Cardiac septum (tissue), 1 donor: ENCODE measurements at regions of chr9 and their contacts with region 1.

Region 1: GRCh38 chr9:35882263-35882848 is 12.2 kb upstream of the OR13J1 start:
- DNase-seq: peak; percentile 90

Region 2: DNA sequence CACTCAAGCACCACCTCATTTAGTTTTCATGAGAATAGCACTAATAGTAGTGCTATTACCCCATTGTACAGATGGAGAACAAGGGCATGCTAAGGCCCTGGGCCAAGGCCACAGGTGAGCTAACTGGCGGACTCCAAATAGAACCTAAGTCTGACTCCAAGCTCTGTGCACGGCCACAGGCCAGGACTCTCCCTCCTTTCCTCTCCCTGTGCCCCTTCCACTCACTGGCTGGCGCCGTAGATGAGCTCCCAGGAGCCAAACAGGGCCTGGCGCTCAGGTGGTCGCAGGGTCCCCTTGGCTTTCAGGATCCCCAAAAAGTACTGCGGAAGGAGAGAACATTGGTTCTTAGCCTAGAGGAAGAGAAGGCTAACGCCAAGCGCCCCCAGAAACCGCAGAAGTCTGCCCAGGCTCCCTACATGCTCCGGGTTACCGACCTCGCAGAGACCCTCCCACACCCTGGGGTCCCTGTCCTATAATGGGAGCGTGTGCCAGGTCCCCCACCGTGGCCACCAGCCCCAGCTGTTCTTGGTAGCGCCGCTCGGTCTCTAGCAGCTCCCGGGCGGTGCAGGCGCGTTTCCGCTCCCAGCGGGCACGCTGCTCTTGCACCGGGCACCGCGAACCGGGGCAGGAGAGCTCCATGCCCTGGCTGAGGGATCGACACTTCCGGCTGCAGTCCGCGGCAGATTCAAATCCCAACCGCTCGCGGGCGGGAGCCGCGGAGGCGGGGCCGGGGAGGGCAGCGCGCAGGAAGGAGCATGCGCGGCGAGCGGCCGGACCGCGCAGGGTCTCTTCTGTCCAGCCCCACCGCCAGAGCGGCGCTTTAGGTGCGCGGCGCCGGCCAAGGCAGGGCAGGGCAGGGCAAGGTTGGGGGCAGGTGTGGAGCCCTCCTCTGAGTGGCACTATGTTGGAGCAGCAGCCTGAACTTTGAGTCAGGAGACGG is 217.6 kb before region 1 on chr9 and contains the start of gene ARHGEF39:
- intact Hi-C with region 1: loop called (anchors 10 kb)
- DNase-seq: peak; percentile 90
- total RNA-seq, gene ARHGEF39: 0.48 TPM

Region 3: DNA sequence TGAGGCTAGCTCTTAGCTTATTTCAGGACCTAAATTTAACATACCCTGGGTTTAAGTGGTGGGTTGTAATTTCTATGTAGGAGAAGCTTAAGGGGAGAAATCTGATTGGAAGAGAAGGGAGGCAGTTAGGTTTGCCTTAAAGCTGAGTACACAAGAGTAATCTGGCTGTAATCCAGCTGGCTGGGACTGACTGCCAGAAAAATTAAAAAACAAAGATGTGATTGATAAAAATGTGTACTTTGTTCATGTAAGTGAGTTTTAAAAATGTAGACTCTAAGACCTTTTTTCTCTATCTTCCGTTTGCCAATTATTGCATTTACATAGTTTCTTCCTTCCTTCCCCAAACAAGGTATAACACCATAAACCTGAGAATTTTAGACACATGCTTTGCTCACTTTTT is 110.8 kb before region 1 on chr9:
- intact Hi-C with region 1: no loop called
- DNase-seq: no peak

Region 4: DNA sequence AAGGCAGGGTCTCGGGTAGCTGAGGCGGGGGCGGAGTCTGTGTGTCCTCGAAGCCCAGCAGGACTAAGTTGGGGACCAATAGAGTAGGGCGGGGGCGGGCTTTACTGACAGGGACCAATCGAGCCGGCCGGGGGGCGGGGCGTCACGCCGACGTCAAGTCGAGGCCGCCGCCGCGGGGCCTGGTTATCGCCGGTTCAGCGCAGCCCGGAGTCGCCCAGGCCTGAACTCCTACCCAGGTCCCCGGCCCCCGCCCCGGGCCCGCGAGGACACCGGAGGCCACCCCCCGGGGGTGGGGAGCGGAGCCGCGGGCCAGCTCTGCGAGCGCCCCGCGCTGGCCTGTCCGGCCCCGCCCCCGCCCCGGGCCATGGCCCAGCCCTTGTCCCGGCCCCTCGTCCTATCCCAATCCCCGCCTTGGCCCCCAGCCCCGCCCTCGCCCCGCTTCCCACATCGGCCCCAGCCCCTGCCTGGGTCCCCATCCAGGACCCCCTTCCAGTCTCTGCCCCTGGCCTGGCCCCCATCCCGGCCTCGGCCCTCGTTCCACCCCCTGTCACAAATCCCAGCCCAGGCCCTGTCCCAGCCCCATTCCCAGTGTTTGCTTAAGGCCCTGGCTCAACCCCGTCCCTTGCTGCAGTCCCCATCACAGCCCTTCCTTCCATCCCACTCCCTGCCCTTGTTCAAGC is 53.1 kb before region 1 on chr9 and contains the start of gene TMEM8B:
- intact Hi-C with region 1: loop called (anchors 2 kb)
- DNase-seq: peak; percentile 98
- total RNA-seq, gene TMEM8B: 22.0 TPM

Region 5: GRCh38 chr9:35914301-35914807 is 32.0 kb after region 1 on chr9:
- intact Hi-C with region 1: no loop called
- DNase-seq: peak; percentile 89

Region 6: GRCh38 chr9:35972093-35972492 is 89.7 kb after region 1 on chr9:
- intact Hi-C with region 1: no loop called
- DNase-seq: no peak

Region 7: DNA sequence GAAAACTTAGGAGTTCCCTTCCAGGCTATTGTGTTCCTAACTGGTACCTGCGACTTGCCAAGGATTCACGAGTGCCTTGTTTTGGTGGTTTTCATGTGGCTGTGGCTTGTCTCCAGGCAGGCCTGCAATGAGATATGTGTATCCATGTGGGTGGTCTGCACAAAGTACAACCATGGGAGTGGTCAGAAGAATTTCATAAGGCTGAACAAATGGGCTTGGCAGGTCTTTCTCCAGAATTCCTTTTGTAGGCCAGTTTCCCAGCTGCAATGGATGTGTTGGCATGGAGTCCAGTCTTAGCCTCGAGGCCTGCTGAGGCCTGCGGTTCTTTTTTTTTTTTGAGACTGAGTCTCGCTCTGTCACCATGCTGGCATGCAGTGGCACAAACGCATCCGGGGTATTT is 661.6 kb after region 1 on chr9:
- intact Hi-C with region 1: no loop called
- DNase-seq: no peak